CD8-positive, alpha-beta T cell (primary cell): ENCODE measurements at regions of chr20 and their contacts with region 1.

Region 1: DNA sequence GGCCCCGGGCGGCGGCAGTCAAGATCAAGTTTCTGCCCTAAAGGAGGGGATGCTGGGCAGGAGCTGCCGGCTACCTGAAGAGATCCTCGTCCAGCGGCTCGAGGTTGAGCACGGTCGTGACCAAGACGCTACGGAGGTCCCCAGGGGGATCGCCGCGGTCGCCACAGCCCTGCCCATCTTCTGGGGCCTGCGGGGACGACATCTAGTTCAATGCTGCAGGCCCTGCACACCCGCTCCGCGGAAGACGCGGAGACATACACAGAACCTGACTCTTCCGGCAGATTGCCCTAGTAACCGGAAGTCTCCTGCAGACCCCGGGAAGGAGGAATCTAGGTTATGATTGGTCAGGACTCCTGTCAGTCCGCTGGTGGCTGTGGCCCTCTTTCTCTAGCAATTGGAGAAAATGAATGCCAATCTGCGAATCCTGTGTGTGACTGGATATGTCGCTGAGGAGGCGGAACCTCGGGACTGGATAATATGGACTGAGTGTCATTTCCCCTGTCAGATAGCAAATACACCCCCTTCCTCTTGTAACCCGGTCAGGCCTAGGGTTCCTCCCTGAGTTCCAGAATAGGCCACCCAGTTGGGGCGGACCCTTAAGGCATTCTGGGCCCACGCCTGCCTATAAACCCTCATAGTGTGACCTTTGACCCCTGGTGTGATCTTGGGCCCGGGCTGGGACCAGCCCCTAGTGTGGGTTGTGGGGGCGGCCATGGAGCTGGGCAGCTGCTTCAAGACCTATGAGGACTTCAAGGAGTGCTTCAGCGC is at the starts of genes ACOT8 and ZSWIM3:
- DNase-seq: peak; percentile 79 to 100 (median 91)
- ATAC-seq: peak; percentile 96
- H3K4me3 ChIP-seq: peak within 1 kb of the TSS; percentile 82 to 87
- H3K4me3 Mint-ChIP-seq: peak within 1 kb of the TSS; percentile 96
- H3K27ac ChIP-seq: peak within 1 kb of the TSS; percentile 80 to 93
- H3K27ac Mint-ChIP-seq: peak within 1 kb of the TSS; percentile 99
- H3K4me1 ChIP-seq: peaks cover 29% of the 10 kb centered on the region
- H3K4me1 Mint-ChIP-seq: peaks cover 52% of the 10 kb centered on the region
- H3K27me3 ChIP-seq: no peaks in the 10 kb centered on the region
- H3K27me3 Mint-ChIP-seq: no peaks in the 10 kb centered on the region
- CTCF ChIP-seq: no peak
- total RNA-seq, gene ACOT8: 14.5 to 17.0 TPM
- total RNA-seq, gene ZSWIM3: 0.30 to 0.58 TPM

Region 2: DNA sequence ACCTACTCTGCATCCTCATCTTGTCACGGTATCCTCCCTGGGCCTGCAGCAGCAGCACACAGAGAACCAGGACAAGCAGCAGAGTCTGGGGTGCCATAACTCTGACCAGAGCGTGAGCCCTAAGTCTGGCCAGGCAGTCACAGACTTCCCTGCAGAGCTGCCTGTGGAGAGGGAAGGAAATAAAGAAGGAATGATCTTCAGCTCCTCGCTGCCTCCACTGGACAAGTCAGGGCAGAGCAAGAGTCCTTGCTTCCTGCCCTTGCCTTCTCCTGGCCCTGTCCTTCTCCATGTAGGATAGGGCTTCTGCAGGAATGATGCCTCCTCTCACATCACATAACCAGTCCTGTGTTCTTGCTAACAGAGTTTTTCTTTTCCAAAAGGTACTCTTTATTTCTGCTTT is 171.4 kb before region 1 on chr20:
- CTCF ChIA-PET with region 1: no interaction called
- POLR2A ChIA-PET with region 1: no interaction called
- intact Hi-C with region 1: no loop called
- DNase-seq: no peak
- ATAC-seq: no peak
- H3K4me3 ChIP-seq: no peak overlapping the region
- H3K4me3 Mint-ChIP-seq: no peak overlapping the region
- H3K27ac ChIP-seq: no peak overlapping the region
- H3K27ac Mint-ChIP-seq: no peak overlapping the region
- H3K4me1 ChIP-seq: no peaks in the 10 kb centered on the region
- H3K4me1 Mint-ChIP-seq: no peaks in the 10 kb centered on the region
- H3K27me3 ChIP-seq: no peaks in the 10 kb centered on the region
- H3K27me3 Mint-ChIP-seq: peaks cover 24% of the 10 kb centered on the region
- CTCF ChIP-seq: no peak

Region 3: DNA sequence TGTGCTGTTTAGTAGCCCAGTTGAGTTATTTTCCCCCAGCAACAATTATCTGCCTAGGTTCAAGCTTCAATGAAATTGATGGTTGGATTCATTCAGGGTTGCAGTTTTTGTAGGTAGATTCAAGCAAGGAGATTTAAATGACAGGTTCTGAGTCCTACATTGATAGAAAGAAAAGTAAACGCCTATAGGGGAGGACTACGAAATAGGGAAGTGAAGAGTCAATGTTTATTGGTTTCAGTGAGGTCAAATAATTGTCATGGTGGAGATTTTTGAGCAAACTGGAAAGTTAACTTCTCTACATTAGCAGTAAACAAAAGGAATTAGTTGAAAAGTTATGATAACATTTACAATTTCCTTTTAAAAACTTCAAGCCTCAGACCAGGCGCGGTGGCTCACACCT is 156.2 kb before region 1 on chr20:
- CTCF ChIA-PET with region 1: no interaction called
- POLR2A ChIA-PET with region 1: no interaction called
- intact Hi-C with region 1: no loop called
- DNase-seq: no peak
- ATAC-seq: no peak
- H3K4me3 ChIP-seq: no peak overlapping the region
- H3K4me3 Mint-ChIP-seq: no peak overlapping the region
- H3K27ac ChIP-seq: no peak overlapping the region
- H3K27ac Mint-ChIP-seq: no peak overlapping the region
- H3K4me1 ChIP-seq: no peaks in the 10 kb centered on the region
- H3K4me1 Mint-ChIP-seq: no peaks in the 10 kb centered on the region
- H3K27me3 ChIP-seq: no peaks in the 10 kb centered on the region
- H3K27me3 Mint-ChIP-seq: peaks cover 8% of the 10 kb centered on the region
- CTCF ChIP-seq: no peak

Region 4: GRCh38 chr20:45798935-45799642 is 58.2 kb before region 1 on chr20:
- CTCF ChIA-PET with region 1: interaction called, 5 read pairs
- POLR2A ChIA-PET with region 1: no interaction called
- intact Hi-C with region 1: loop called in 1 of 2 experiments (anchors 1 kb)
- DNase-seq: peak; percentile 19 to 78 (median 66)
- ATAC-seq: peak; percentile 96
- H3K4me3 ChIP-seq: no peak overlapping the region
- H3K4me3 Mint-ChIP-seq: no peak overlapping the region
- H3K27ac ChIP-seq: peak overlapping the region in 1 of 2 experiments; percentile 31
- H3K27ac Mint-ChIP-seq: peak overlapping the region; percentile 61
- H3K4me1 ChIP-seq: peaks cover 9% of the 10 kb centered on the region
- H3K4me1 Mint-ChIP-seq: peaks cover 11% of the 10 kb centered on the region
- H3K27me3 ChIP-seq: no peaks in the 10 kb centered on the region
- H3K27me3 Mint-ChIP-seq: no peaks in the 10 kb centered on the region
- CTCF ChIP-seq: peak; percentile 73

Region 5: GRCh38 chr20:45833030-45833882 is 24.0 kb before region 1 on chr20 and contains the start of gene SNX21:
- CTCF ChIA-PET with region 1: no interaction called
- POLR2A ChIA-PET with region 1: interaction called, 5 read pairs
- intact Hi-C with region 1: loop called in 1 of 2 experiments (anchors 2 kb)
- DNase-seq: peak in 7 of 9 experiments; percentile 6 to 61 (median 26)
- ATAC-seq: peak; percentile 73
- H3K4me3 ChIP-seq: peak within 1 kb of the TSS; percentile 64 to 73
- H3K4me3 Mint-ChIP-seq: peak within 1 kb of the TSS; percentile 86
- H3K27ac ChIP-seq: no peak within 1 kb of the TSS
- H3K27ac Mint-ChIP-seq: no peak within 1 kb of the TSS
- H3K4me1 ChIP-seq: peaks cover 7% of the 10 kb centered on the region
- H3K4me1 Mint-ChIP-seq: peaks cover 17% of the 10 kb centered on the region
- H3K27me3 ChIP-seq: no peaks in the 10 kb centered on the region
- H3K27me3 Mint-ChIP-seq: no peaks in the 10 kb centered on the region
- CTCF ChIP-seq: no peak
- total RNA-seq, gene SNX21: 0.46 to 0.50 TPM

Region 6: GRCh38 chr20:45872648-45873047 is 15.3 kb after region 1 on chr20:
- CTCF ChIA-PET with region 1: no interaction called
- POLR2A ChIA-PET with region 1: no interaction called
- intact Hi-C with region 1: no loop called
- DNase-seq: no peak
- ATAC-seq: no peak
- H3K4me3 ChIP-seq: no peak overlapping the region
- H3K4me3 Mint-ChIP-seq: no peak overlapping the region
- H3K27ac ChIP-seq: no peak overlapping the region
- H3K27ac Mint-ChIP-seq: no peak overlapping the region
- H3K4me1 ChIP-seq: no peaks in the 10 kb centered on the region
- H3K4me1 Mint-ChIP-seq: no peaks in the 10 kb centered on the region
- H3K27me3 ChIP-seq: no peaks in the 10 kb centered on the region
- H3K27me3 Mint-ChIP-seq: no peaks in the 10 kb centered on the region
- CTCF ChIP-seq: no peak

Region 7: GRCh38 chr20:45890985-45891983 is 34.0 kb after region 1 on chr20 and contains the starts of genes CTSA and NEURL2:
- CTCF ChIA-PET with region 1: interaction called, 5 read pairs
- POLR2A ChIA-PET with region 1: interaction called, 14 read pairs
- intact Hi-C with region 1: loop called (anchors 1 kb)
- DNase-seq: peak; percentile 53 to 91 (median 84)
- ATAC-seq: peak; percentile 70
- H3K4me3 ChIP-seq: peak within 1 kb of the TSS; percentile 89 to 99
- H3K4me3 Mint-ChIP-seq: peak within 1 kb of the TSS; percentile 93
- H3K27ac ChIP-seq: peak within 1 kb of the TSS; percentile 46 to 60
- H3K27ac Mint-ChIP-seq: peak within 1 kb of the TSS; percentile 90
- H3K4me1 ChIP-seq: peaks cover 24% of the 10 kb centered on the region
- H3K4me1 Mint-ChIP-seq: peaks cover 35% of the 10 kb centered on the region
- H3K27me3 ChIP-seq: no peaks in the 10 kb centered on the region
- H3K27me3 Mint-ChIP-seq: no peaks in the 10 kb centered on the region
- CTCF ChIP-seq: no peak
- total RNA-seq, gene CTSA: 52.8 to 64.2 TPM
- total RNA-seq, gene NEURL2: 1.6 to 1.7 TPM

Region 8: GRCh38 chr20:46237227-46237626 is 379.9 kb after region 1 on chr20:
- CTCF ChIA-PET with region 1: no interaction called
- POLR2A ChIA-PET with region 1: no interaction called
- intact Hi-C with region 1: no loop called
- DNase-seq: no peak
- ATAC-seq: no peak
- H3K4me3 ChIP-seq: no peak overlapping the region
- H3K4me3 Mint-ChIP-seq: no peak overlapping the region
- H3K27ac ChIP-seq: no peak overlapping the region
- H3K27ac Mint-ChIP-seq: no peak overlapping the region
- H3K4me1 ChIP-seq: no peaks in the 10 kb centered on the region
- H3K4me1 Mint-ChIP-seq: no peaks in the 10 kb centered on the region
- H3K27me3 ChIP-seq: peaks cover 0 to 8% of the 10 kb centered on the region in 2 experiments
- H3K27me3 Mint-ChIP-seq: peaks cover 33% of the 10 kb centered on the region
- CTCF ChIP-seq: no peak